Activated T-helper 1 cell treated with anti-CD3 and anti-CD28 coated beads, Interleukin-12 subunit alpha, Interleukin-12 subunit beta, Interleukin-2, Interleukin-4 antibody, amounts not matched to agents 30 ng/mL and 10 ng/mL and 1 ng/mL, durations not matched to agents 14 hours and 24 hours and 36 hours (primary cell): ENCODE measurements at regions of chr7 and their contacts with region 1.

Region 1: DNA sequence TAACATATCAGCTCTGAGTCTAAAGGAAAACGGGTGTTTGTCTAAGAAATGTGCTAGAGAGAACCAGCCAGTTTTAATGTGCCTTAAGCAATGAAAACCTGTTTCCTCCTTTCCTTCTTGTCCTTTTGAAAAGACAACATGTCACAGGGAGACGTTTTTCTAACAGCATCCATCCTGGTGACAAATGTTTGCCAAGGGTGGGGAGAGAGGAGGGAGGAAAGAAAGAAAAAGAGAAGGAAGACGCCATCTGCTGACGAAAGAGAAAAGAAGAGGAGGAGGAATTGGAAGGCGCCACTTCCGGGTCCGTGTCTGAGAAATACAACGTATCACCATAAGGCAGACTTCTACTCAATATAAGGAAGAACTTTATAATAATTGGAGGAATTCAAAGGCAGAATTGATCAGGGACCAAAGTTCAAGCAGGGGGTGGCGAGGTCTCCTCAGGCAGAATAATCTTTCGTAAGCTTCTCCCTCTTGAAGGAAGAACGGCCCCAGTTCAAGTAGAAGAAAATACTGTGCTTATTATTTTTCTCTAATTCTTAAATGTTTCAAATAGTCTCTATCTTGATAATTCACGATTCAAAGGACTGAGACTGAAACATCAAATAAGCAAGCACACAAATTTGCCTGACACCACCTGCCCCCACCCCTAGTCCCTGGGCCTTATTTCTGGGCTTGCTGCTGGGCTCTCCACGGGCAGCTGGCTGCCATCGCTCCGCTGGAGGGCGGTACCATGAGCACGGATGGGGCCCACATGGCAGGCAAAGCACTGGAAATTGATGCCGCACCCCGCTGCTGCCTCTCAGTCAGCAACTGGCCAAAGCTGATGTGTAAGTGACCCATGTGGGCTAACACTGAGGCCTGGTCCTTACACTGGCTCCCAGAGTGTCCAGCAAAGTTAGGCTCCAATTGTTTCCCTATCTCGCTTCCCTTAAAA is 273.7 kb upstream of the KLF14 start:
- DNase-seq: peak; percentile 53
- H3K4me3 Mint-ChIP-seq: peak overlapping the region; percentile 68
- H3K27ac Mint-ChIP-seq: peak overlapping the region; percentile 89
- H3K4me1 Mint-ChIP-seq: peaks cover 75% of the 10 kb centered on the region
- H3K27me3 Mint-ChIP-seq: no peaks in the 10 kb centered on the region

Region 2: DNA sequence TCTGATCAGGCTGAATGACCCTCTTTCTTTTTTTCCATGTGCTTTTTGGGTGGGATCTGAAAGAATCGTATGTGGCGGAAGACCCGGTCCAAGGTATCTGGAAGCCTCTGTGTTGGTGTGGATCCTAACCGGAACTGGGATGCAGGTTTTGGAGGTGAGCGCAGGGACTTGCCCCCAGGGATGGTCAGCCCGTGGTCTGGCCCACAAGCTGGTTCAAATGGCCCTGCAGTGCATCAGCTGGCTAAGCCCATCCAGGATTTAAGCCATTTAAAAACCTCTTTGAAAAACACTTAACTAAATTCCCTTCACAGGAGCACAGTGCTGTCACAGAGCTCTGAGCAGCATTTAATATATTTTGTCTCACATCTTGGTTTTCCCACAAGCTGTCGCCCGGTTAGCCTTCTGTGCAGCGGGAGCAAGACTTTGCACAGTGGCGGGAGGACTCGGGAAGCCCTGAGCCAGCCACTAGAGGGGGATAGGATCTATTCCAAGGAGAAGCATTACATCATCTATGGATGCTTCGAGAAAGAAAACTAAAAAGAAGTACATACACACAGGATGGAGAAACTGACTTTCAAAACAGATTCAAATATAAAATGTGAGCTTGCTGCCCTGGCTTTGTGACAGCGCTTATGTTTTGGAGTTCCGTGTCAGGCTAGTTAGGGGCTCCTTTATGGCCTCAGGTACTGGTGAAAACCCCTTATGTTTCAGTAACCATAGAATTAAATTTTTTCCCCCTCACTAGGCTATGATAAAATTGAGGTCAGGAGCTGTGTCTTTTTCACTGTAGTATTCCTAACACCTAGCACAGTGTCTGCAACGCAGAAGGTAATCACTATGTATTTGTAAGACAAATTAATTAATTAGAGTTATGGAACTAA is 729.7 kb before region 1 on chr7:
- intact Hi-C with region 1: loop called (anchors 2 kb)
- DNase-seq: no peak
- H3K4me3 Mint-ChIP-seq: no peak overlapping the region
- H3K27ac Mint-ChIP-seq: peak overlapping the region; percentile 73
- H3K4me1 Mint-ChIP-seq: peaks cover 24% of the 10 kb centered on the region
- H3K27me3 Mint-ChIP-seq: peaks cover 2% of the 10 kb centered on the region

Region 3: GRCh38 chr7:130758429-130759056 is 249.1 kb before region 1 on chr7:
- intact Hi-C with region 1: no loop called
- DNase-seq: no peak
- H3K4me3 Mint-ChIP-seq: no peak overlapping the region
- H3K27ac Mint-ChIP-seq: no peak overlapping the region
- H3K4me1 Mint-ChIP-seq: no peaks in the 10 kb centered on the region
- H3K27me3 Mint-ChIP-seq: peaks cover 13% of the 10 kb centered on the region

Region 4: GRCh38 chr7:130912862-130913631 is 94.6 kb before region 1 on chr7:
- intact Hi-C with region 1: loop called (anchors 1 kb)
- DNase-seq: peak; percentile 79
- H3K4me3 Mint-ChIP-seq: peak overlapping the region; percentile 77
- H3K27ac Mint-ChIP-seq: peak overlapping the region; percentile 92
- H3K4me1 Mint-ChIP-seq: peaks cover 93% of the 10 kb centered on the region
- H3K27me3 Mint-ChIP-seq: no peaks in the 10 kb centered on the region

Region 5: GRCh38 chr7:130961128-130961601 is 46.5 kb before region 1 on chr7:
- intact Hi-C with region 1: loop called (anchors 1 kb)
- DNase-seq: peak; percentile 83
- H3K4me3 Mint-ChIP-seq: peak overlapping the region; percentile 92
- H3K27ac Mint-ChIP-seq: peak overlapping the region; percentile 98
- H3K4me1 Mint-ChIP-seq: peaks cover 29% of the 10 kb centered on the region
- H3K27me3 Mint-ChIP-seq: no peaks in the 10 kb centered on the region

Region 6: GRCh38 chr7:130996841-130997231 is 10.8 kb before region 1 on chr7:
- intact Hi-C with region 1: loop called (anchors 1 kb)
- DNase-seq: no peak
- H3K4me3 Mint-ChIP-seq: peak overlapping the region; percentile 50
- H3K27ac Mint-ChIP-seq: peak overlapping the region; percentile 84
- H3K4me1 Mint-ChIP-seq: peaks cover 59% of the 10 kb centered on the region
- H3K27me3 Mint-ChIP-seq: no peaks in the 10 kb centered on the region

Region 7: GRCh38 chr7:131040467-131040932 is 32.8 kb after region 1 on chr7:
- intact Hi-C with region 1: loop called (anchors 5 kb)
- DNase-seq: peak; percentile 34
- H3K4me3 Mint-ChIP-seq: no peak overlapping the region
- H3K27ac Mint-ChIP-seq: no peak overlapping the region
- H3K4me1 Mint-ChIP-seq: peaks cover 24% of the 10 kb centered on the region
- H3K27me3 Mint-ChIP-seq: no peaks in the 10 kb centered on the region

Region 8: DNA sequence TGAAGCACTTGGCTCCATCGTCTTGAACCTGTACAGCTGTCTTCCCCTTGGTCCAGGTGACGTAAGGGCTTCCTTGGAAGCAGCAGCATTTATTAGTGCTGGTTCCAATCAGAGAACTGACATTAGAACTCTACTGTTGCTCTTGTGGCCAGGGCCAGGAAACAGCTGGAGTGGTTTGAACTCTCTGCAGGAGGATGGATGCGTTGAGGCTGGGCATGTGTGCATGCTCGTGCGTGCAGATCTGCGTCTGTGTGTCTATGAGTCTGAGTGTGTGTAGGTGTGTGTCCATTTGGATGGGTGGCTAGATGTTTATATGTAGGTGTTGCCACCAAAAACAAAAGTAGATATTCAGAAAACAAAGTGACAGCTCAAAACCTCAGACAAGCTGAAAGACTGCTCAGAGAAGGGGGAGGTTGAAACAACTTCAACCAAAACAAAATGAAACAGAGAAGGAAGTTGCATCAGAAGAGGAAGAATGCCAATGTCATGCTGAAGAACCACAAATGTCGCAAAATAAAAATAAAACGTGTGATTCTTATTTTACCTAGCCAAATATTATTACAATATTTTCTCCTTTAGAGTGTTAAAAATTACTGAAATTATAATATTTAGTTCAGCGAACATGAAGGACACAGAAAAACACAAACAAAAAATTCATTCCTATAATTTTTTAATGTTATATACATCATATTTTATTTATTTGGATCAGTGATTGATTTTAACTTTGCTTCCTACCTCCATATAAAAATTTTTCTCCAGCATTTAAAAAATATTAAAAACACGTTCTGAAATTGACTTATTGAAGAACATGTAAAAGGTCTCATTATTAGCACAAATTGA is 223.9 kb after region 1 on chr7:
- intact Hi-C with region 1: loop called (anchors 1 kb)
- DNase-seq: peak; percentile 65
- H3K4me3 Mint-ChIP-seq: peak overlapping the region; percentile 50
- H3K27ac Mint-ChIP-seq: peak overlapping the region; percentile 86
- H3K4me1 Mint-ChIP-seq: peaks cover 62% of the 10 kb centered on the region
- H3K27me3 Mint-ChIP-seq: no peaks in the 10 kb centered on the region

Region 9: DNA sequence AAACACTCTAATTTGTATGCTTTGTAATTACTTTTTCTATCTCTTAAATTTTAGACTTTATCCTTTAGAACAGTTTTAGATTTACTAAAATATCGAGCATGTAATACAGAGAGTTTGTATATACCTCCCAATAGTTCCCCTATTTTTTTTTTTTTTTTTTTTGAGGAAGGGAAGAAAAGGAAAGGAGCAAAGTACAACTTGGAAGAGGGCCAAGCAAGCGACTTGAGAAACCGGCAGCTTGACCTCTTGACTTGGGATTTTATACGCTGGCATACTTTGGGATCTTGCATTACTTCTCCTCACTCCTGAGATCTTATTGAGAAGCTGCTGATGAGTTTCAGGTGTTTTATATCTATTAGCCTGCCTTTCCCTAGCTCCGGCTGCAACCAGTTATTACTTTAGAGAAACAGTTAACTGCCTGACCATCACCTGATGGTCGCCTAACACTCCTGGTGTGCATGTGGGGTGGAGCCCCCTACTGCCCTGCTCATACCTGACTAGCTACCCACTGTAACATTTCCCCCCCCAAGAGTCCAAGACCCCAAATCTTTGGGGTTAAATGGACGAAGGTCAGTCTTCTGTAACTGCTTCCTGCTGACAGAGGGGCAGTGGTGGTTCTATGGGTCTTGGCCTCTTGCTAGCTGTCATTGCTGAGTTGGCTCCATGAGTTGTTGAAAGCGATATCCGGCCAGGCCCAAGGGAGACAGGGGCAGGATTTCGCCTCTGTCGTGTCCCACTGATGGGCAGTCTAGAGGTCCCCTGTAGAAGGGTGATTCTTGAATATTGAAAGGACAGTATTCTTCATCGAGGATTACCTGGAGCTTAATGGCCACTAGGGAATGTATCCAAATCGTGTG is 348.5 kb after region 1 on chr7:
- intact Hi-C with region 1: no loop called
- DNase-seq: no peak
- H3K4me3 Mint-ChIP-seq: no peak overlapping the region
- H3K27ac Mint-ChIP-seq: no peak overlapping the region
- H3K4me1 Mint-ChIP-seq: peaks cover 45% of the 10 kb centered on the region
- H3K27me3 Mint-ChIP-seq: no peaks in the 10 kb centered on the region